ENCODE measurements at regions of chr14 and their contacts with region 1.

Region 1: GRCh38 chr14:88321692-88322503 is 1.2 kb downstream of the KCNK10 start:
- DNase-seq: no peak
- ATAC-seq: no peak; the same call in 2 of the 3 replicates
- H3K4me3 ChIP-seq: no peak overlapping the region
- H3K27ac ChIP-seq: no peak overlapping the region
- H3K4me1 ChIP-seq: 0 out of 2 replicates have a peak, but pooled peaks cover 8% of the 10 kb centered on the region
- H3K27me3 ChIP-seq: peaks cover 5 to 67% of the 10 kb centered on the region in 2 experiments; a peak in 4 of 5 replicates
- CTCF ChIP-seq: no peak
- EP300 ChIP-seq: no peak
- POLR2A ChIP-seq: no peak
- RAD21 ChIP-seq: no peak

Region 2: GRCh38 chr14:88248606-88249005 is 73.3 kb before region 1 on chr14:
- CTCF ChIA-PET with region 1: no interaction called
- POLR2A ChIA-PET with region 1: no interaction called
- in situ Hi-C with region 1: no loop called
- intact Hi-C with region 1: no loop called
- DNase-seq: no peak
- ATAC-seq: no peak
- H3K4me3 ChIP-seq: no peak overlapping the region
- H3K27ac ChIP-seq: no peak overlapping the region
- H3K4me1 ChIP-seq: peaks cover 6% of the 10 kb centered on the region; the same call in 1 of the 2 replicates
- H3K27me3 ChIP-seq: peaks cover 0 to 14% of the 10 kb centered on the region in 2 experiments; a peak in 2 of 5 replicates
- CTCF ChIP-seq: no peak
- EP300 ChIP-seq: no peak
- POLR2A ChIP-seq: no peak
- RAD21 ChIP-seq: no peak

Region 3: GRCh38 chr14:88272390-88273269 is 49.3 kb before region 1 on chr14:
- CTCF ChIA-PET with region 1: no interaction called
- POLR2A ChIA-PET with region 1: no interaction called
- in situ Hi-C with region 1: no loop called
- intact Hi-C with region 1: loop called (anchors 2 kb)
- DNase-seq: no peak
- ATAC-seq: no peak
- H3K4me3 ChIP-seq: no peak overlapping the region
- H3K27ac ChIP-seq: no peak overlapping the region
- H3K4me1 ChIP-seq: peaks cover 13% of the 10 kb centered on the region
- H3K27me3 ChIP-seq: peaks cover 1 to 11% of the 10 kb centered on the region in 2 experiments; a peak in 2 of 5 replicates
- CTCF ChIP-seq: no peak
- EP300 ChIP-seq: no peak
- POLR2A ChIP-seq: no peak
- RAD21 ChIP-seq: no peak